ENCODE measurements at regions of chr15 and their contacts with region 1.

Region 1: DNA sequence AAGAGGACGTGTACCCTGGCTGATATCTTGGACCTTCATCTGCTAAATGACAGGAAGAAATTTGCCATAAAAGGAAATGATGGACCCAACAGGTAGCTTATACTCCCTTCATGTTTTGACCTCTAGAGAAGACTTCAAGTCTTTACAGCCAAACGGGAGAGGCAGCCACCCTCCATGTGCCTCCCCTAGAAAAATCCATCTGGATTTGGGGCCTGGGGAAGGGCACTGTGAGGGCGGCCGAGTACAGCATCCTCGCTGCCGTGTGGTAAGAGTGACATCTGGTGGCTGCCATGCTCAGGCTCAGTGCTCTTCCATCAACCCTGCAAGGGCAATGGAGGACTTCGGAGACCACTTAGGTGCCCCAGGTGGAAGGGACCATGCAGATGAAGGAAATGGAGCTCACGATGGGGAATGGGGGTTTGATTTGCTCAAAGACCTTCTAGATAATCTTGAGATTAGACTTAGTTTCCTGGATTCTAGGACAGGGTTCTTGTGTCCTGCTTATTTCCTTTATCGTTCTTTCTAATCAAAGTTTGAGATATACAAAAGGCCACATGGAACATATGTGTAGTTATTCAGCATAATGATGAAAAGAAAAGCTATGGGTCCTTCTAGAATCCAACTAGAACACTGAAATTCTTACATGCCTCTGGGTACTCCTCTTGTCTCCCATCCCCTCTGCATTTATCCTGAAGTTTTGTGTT is 44.4 kb downstream of the AQP9 start:
- DNase-seq: peak; percentile 65 to 75
- ATAC-seq: peak; percentile 95 to 100
- H3K4me3 ChIP-seq: no peak overlapping the region
- H3K27ac ChIP-seq: no peak overlapping the region
- H3K4me1 ChIP-seq: no peaks in the 10 kb centered on the region
- CTCF ChIP-seq: peak; percentile 96
- EP300 ChIP-seq: no peak
- POLR2A ChIP-seq: no peak
- RAD21 ChIP-seq: peak; percentile 95 to 97

Region 2: GRCh38 chr15:57732526-57733331 is 449.9 kb before region 1 on chr15:
- CTCF ChIA-PET with region 1: interaction called, 10 read pairs
- POLR2A ChIA-PET with region 1: no interaction called
- DNase-seq: peak; percentile 46 to 64
- ATAC-seq: peak; percentile 81 to 93
- H3K4me3 ChIP-seq: no peak overlapping the region
- H3K27ac ChIP-seq: no peak overlapping the region
- H3K4me1 ChIP-seq: no peaks in the 10 kb centered on the region
- CTCF ChIP-seq: peak; percentile 94
- EP300 ChIP-seq: no peak
- POLR2A ChIP-seq: no peak
- RAD21 ChIP-seq: peak; percentile 57 to 61

Region 3: DNA sequence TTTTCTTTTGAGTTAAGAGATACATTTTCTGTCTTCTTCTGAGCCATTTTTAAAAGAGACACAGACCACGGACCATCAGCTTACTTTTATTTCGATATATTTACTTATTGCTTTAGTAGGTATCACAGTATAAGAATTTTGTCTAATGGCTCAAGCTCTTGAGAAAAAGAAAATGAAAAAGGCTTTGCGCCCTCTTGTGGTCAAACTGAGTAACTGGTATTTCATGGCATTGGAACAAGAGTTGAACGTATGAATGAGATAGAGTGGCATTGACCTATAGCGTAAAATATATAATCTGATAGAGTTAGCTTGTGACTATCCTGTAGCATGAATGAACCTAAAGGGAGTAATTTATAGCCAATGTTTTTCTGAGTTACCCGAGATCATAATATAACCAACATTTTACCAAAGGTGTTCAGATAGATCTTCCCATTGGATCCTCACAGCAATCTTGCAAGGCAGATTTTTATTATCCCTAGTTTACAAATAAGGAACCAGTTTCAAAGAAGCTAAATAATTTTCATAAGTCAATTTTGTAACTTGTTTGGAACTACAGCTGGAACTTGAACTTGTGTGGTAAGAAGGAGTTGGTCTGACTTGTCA is 321.5 kb before region 1 on chr15:
- CTCF ChIA-PET with region 1: interaction called, 24 read pairs
- POLR2A ChIA-PET with region 1: no interaction called
- DNase-seq: peak; percentile 28 to 74
- ATAC-seq: peak; percentile 28 to 78; a peak in 3 of 6 replicates
- H3K4me3 ChIP-seq: no peak overlapping the region
- H3K27ac ChIP-seq: no peak overlapping the region
- H3K4me1 ChIP-seq: no peaks in the 10 kb centered on the region
- CTCF ChIP-seq: peak; percentile 94
- EP300 ChIP-seq: no peak
- POLR2A ChIP-seq: no peak
- RAD21 ChIP-seq: peak; percentile 63 to 73

Region 4: GRCh38 chr15:58043192-58043903 is 139.3 kb before region 1 on chr15:
- CTCF ChIA-PET with region 1: interaction called, 39 read pairs
- POLR2A ChIA-PET with region 1: no interaction called
- DNase-seq: peak; percentile 28 to 49
- ATAC-seq: peak; percentile 82 to 89; a peak in 5 of 6 replicates
- H3K4me3 ChIP-seq: no peak overlapping the region
- H3K27ac ChIP-seq: no peak overlapping the region
- H3K4me1 ChIP-seq: no peaks in the 10 kb centered on the region
- CTCF ChIP-seq: peak; percentile 81
- EP300 ChIP-seq: no peak
- POLR2A ChIP-seq: no peak
- RAD21 ChIP-seq: peak; percentile 40 to 48; a peak in 3 of 5 replicates

Region 5: DNA sequence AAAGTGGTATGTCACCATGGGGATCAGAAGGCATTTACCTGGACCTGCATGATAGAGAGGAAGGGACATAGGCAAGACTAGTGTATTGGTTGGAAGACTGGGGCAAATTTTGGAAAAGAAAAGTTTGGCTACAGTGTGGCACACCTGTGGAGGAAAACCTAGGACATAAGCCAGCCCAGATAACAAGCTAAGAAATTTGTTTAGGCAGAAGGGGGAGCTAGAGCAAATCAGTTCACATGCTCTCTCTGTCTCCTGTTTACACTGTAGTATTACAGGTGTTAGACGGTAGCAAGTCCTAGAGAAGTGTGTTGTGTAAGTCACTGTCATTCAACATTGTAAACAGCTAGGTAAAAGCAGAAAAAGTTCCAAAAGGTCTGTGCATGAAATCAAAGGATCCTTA is 105.2 kb before region 1 on chr15:
- CTCF ChIA-PET with region 1: interaction called, 17 read pairs
- POLR2A ChIA-PET with region 1: no interaction called
- DNase-seq: no peak
- ATAC-seq: peak; percentile 54 to 71; a peak in 3 of 6 replicates
- H3K4me3 ChIP-seq: no peak overlapping the region
- H3K27ac ChIP-seq: no peak overlapping the region
- H3K4me1 ChIP-seq: no peaks in the 10 kb centered on the region
- CTCF ChIP-seq: peak; percentile 36; the same call in 1 of the 3 replicates
- EP300 ChIP-seq: no peak
- POLR2A ChIP-seq: no peak
- RAD21 ChIP-seq: peak in 1 of 2 experiments; percentile 17; a peak in 1 of 5 replicates

Region 6: GRCh38 chr15:58165661-58166060 is 17.0 kb before region 1 on chr15:
- CTCF ChIA-PET with region 1: interaction called, 36 read pairs
- POLR2A ChIA-PET with region 1: no interaction called
- DNase-seq: no peak
- ATAC-seq: no peak
- H3K4me3 ChIP-seq: no peak overlapping the region
- H3K27ac ChIP-seq: no peak overlapping the region
- H3K4me1 ChIP-seq: no peaks in the 10 kb centered on the region
- CTCF ChIP-seq: no peak
- EP300 ChIP-seq: no peak
- POLR2A ChIP-seq: no peak
- RAD21 ChIP-seq: no peak

Region 7: DNA sequence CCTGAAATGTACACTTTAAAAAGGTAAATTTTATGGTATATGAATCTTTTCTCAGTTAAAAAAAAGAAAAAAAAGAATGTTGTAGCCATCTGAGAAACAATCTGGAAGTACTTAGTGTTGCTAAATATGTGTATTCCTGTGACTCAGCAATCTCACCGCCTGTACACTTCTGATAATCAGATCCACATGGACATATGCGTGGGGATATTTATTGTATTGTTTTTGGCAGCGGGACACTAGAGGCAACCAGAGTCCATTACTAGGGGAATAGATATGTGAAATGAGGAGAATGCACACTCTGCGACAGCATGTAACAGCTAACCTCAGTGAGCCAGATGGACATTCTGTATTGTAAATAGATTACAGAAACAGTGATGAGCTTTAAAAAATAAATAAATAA is 20.9 kb after region 1 on chr15:
- CTCF ChIA-PET with region 1: interaction called, 52 read pairs
- POLR2A ChIA-PET with region 1: no interaction called
- DNase-seq: no peak
- ATAC-seq: no peak
- H3K4me3 ChIP-seq: no peak overlapping the region
- H3K27ac ChIP-seq: no peak overlapping the region
- H3K4me1 ChIP-seq: no peaks in the 10 kb centered on the region
- CTCF ChIP-seq: no peak
- EP300 ChIP-seq: no peak
- POLR2A ChIP-seq: no peak
- RAD21 ChIP-seq: no peak